ENCODE measurements at regions of chr15 and their contacts with region 1.

Region 1: GRCh38 chr15:65516997-65517865 is at the start of gene DPP8:
- DNase-seq: peak; percentile 81
- H3K4me3 ChIP-seq: peak within 1 kb of the TSS; percentile 89
- H3K27ac ChIP-seq: peak within 1 kb of the TSS; percentile 68
- H3K27me3 ChIP-seq: no peaks in the 10 kb centered on the region
- CTCF ChIP-seq: peak; percentile 96
- polyA plus RNA-seq, gene DPP8: 24.1 and 29.9 TPM in 2 replicates

Region 2: GRCh38 chr15:65530314-65531122 is 13.3 kb after region 1 on chr15 and contains the start of gene HACD3:
- CTCF ChIA-PET with region 1: interaction called, 6 read pairs
- POLR2A ChIA-PET with region 1: interaction called, 15 read pairs
- DNase-seq: no peak
- H3K4me3 ChIP-seq: peak within 1 kb of the TSS; percentile 92
- H3K27ac ChIP-seq: peak within 1 kb of the TSS; percentile 52
- H3K27me3 ChIP-seq: no peaks in the 10 kb centered on the region
- CTCF ChIP-seq: no peak
- polyA plus RNA-seq, gene HACD3: 104 and 130 TPM in 2 replicates

Measured in AG04450 (cell line).